ENCODE measurements at regions of chr4 and their contacts with region 1.

Region 1: GRCh38 chr4:140095694-140096482 is 58.1 kb downstream of the MAML3 start:
- DNase-seq: peak; percentile 16 to 92 (median 43)
- ATAC-seq: peak; percentile 72
- H3K4me3 ChIP-seq: peak overlapping the region; percentile 44
- H3K4me3 Mint-ChIP-seq: peak overlapping the region; percentile 77
- H3K27ac ChIP-seq: peak overlapping the region; percentile 69 to 77
- H3K27ac Mint-ChIP-seq: peak overlapping the region; percentile 96
- H3K4me1 ChIP-seq: peaks cover 46% of the 10 kb centered on the region
- H3K4me1 Mint-ChIP-seq: peaks cover 76% of the 10 kb centered on the region
- H3K27me3 ChIP-seq: no peaks in the 10 kb centered on the region
- H3K27me3 Mint-ChIP-seq: no peaks in the 10 kb centered on the region
- CTCF ChIP-seq: no peak

Region 2: DNA sequence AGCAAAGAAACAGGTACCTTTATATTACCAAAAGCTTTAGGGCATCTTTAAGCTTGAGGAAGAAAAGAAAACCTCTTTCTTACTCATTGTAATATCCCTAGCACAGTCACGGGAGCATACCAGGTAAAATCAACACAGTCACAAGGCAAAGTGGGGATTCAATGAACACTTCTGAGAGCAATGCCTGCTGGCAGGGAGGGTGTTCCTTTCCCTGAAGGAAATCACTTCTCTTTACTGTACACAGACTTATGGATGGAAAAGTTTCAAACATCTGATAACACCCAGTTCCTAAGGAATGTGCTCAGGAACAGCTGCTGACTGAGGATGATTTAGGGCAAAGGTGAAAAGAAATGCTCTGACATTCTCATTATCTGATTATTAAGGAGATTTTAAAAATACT is 36.7 kb before region 1 on chr4:
- CTCF ChIA-PET with region 1: interaction called, 3 read pairs
- POLR2A ChIA-PET with region 1: interaction called, 3 read pairs
- intact Hi-C with region 1: loop called in 1 of 2 experiments (anchors 5 kb)
- DNase-seq: no peak
- ATAC-seq: no peak
- H3K4me3 ChIP-seq: no peak overlapping the region
- H3K4me3 Mint-ChIP-seq: no peak overlapping the region
- H3K27ac ChIP-seq: no peak overlapping the region
- H3K27ac Mint-ChIP-seq: no peak overlapping the region
- H3K4me1 ChIP-seq: no peaks in the 10 kb centered on the region
- H3K4me1 Mint-ChIP-seq: peaks cover 46% of the 10 kb centered on the region
- H3K27me3 ChIP-seq: no peaks in the 10 kb centered on the region
- H3K27me3 Mint-ChIP-seq: peaks cover 6% of the 10 kb centered on the region
- CTCF ChIP-seq: no peak

Region 3: DNA sequence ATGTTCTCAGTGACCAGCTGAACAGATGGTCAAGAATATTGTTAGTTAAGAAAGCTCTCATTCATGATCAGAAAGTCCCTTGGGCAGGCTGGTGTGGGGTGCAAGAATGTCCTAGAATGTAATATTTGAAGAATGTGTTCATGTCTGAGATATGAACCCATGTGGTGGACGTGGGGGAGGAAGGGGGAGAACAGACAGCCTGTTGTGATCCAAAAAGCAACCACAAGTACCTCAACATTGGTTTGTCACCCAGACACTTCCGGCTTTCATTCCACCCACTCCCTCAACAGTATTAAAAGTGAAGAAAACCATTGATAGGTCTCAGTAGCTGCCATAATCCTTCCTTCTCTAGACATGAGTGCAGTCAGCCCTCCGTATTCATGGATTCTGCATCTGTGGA is 24.1 kb before region 1 on chr4:
- CTCF ChIA-PET with region 1: interaction called, 6 read pairs
- POLR2A ChIA-PET with region 1: interaction called, 10 read pairs
- intact Hi-C with region 1: loop called (anchors 1 to 2 kb)
- DNase-seq: peak; percentile 33 to 86 (median 53)
- ATAC-seq: peak; percentile 93
- H3K4me3 ChIP-seq: peak overlapping the region; percentile 19
- H3K4me3 Mint-ChIP-seq: peak overlapping the region; percentile 85
- H3K27ac ChIP-seq: no peak overlapping the region
- H3K27ac Mint-ChIP-seq: peak overlapping the region; percentile 94
- H3K4me1 ChIP-seq: peaks cover 35% of the 10 kb centered on the region
- H3K4me1 Mint-ChIP-seq: peaks cover 46% of the 10 kb centered on the region
- H3K27me3 ChIP-seq: no peaks in the 10 kb centered on the region
- H3K27me3 Mint-ChIP-seq: no peaks in the 10 kb centered on the region
- CTCF ChIP-seq: no peak

Region 4: DNA sequence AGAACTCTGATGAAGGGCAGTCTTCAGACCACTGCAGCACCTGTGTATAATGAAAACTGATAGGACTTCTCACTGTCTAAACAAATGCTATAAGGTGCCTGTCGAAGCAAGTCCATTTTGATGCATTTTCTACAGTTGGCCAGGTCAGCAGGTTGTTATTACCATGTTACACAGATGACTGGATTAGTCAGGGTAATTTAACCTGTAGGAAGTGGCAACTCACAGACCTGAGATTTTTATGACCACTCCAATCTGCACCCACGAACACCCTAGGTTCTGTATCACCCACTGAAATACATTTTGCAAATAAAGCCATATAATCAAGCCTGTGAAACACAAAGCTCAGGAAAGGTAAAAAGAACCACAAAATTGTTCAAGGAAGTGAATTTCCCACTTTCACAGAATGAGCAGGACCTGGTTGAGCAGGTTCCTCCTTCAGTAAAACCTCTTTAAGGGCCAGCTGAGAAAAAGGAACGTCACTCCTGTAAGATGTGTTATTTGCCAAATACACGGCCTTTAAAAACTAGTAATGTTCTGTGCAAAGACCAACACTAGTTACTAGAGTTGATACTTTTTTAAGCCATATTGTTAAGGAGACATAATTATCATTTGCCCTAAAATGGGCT is 45.4 kb after region 1 on chr4:
- CTCF ChIA-PET with region 1: no interaction called
- POLR2A ChIA-PET with region 1: interaction called, 3 read pairs
- intact Hi-C with region 1: loop called in 1 of 2 experiments (anchors 5 kb)
- DNase-seq: no peak
- ATAC-seq: no peak
- H3K4me3 ChIP-seq: no peak overlapping the region
- H3K4me3 Mint-ChIP-seq: no peak overlapping the region
- H3K27ac ChIP-seq: no peak overlapping the region
- H3K27ac Mint-ChIP-seq: no peak overlapping the region
- H3K4me1 ChIP-seq: peaks cover 3% of the 10 kb centered on the region
- H3K4me1 Mint-ChIP-seq: peaks cover 32% of the 10 kb centered on the region
- H3K27me3 ChIP-seq: no peaks in the 10 kb centered on the region
- H3K27me3 Mint-ChIP-seq: no peaks in the 10 kb centered on the region
- CTCF ChIP-seq: no peak

Region 5: GRCh38 chr4:141046255-141046654 is 950.4 kb after region 1 on chr4:
- CTCF ChIA-PET with region 1: no interaction called
- POLR2A ChIA-PET with region 1: no interaction called
- intact Hi-C with region 1: no loop called
- DNase-seq: no peak
- ATAC-seq: no peak
- H3K4me3 ChIP-seq: no peak overlapping the region
- H3K4me3 Mint-ChIP-seq: no peak overlapping the region
- H3K27ac ChIP-seq: no peak overlapping the region
- H3K27ac Mint-ChIP-seq: no peak overlapping the region
- H3K4me1 ChIP-seq: no peaks in the 10 kb centered on the region
- H3K4me1 Mint-ChIP-seq: no peaks in the 10 kb centered on the region
- H3K27me3 ChIP-seq: no peaks in the 10 kb centered on the region
- H3K27me3 Mint-ChIP-seq: no peaks in the 10 kb centered on the region
- CTCF ChIP-seq: no peak